ENCODE measurements at regions of chr7 and their contacts with region 1.

Region 1: GRCh38 chr7:41940760-41941343 is 238.0 kb upstream of the INHBA start:
- DNase-seq: peak; percentile 38 to 53
- ATAC-seq: peak; percentile 87 to 89
- H3K4me3 ChIP-seq: no peak overlapping the region
- H3K27ac ChIP-seq: no peak overlapping the region
- H3K4me1 ChIP-seq: peaks cover 0 to 3% of the 10 kb centered on the region in 2 donors
- H3K27me3 ChIP-seq: no peaks in the 10 kb centered on the region
- CTCF ChIP-seq: peak; percentile 74 to 90 (median 83)
- POLR2A ChIP-seq: no peak

Region 2: GRCh38 chr7:41977151-41977651 is 36.3 kb after region 1 on chr7:
- in situ Hi-C with region 1: no loop called
- intact Hi-C with region 1: loop called (anchors 2 kb)
- DNase-seq: peak; percentile 34 to 66
- ATAC-seq: peak; percentile 86 to 89
- H3K4me3 ChIP-seq: no peak overlapping the region
- H3K27ac ChIP-seq: peak overlapping the region; percentile 33 to 65 (median 54)
- H3K4me1 ChIP-seq: peaks cover 30 to 48% of the 10 kb centered on the region in 2 donors
- H3K27me3 ChIP-seq: no peaks in the 10 kb centered on the region
- CTCF ChIP-seq: peak; percentile 65 to 80 (median 68)
- POLR2A ChIP-seq: no peak

Region 3: DNA sequence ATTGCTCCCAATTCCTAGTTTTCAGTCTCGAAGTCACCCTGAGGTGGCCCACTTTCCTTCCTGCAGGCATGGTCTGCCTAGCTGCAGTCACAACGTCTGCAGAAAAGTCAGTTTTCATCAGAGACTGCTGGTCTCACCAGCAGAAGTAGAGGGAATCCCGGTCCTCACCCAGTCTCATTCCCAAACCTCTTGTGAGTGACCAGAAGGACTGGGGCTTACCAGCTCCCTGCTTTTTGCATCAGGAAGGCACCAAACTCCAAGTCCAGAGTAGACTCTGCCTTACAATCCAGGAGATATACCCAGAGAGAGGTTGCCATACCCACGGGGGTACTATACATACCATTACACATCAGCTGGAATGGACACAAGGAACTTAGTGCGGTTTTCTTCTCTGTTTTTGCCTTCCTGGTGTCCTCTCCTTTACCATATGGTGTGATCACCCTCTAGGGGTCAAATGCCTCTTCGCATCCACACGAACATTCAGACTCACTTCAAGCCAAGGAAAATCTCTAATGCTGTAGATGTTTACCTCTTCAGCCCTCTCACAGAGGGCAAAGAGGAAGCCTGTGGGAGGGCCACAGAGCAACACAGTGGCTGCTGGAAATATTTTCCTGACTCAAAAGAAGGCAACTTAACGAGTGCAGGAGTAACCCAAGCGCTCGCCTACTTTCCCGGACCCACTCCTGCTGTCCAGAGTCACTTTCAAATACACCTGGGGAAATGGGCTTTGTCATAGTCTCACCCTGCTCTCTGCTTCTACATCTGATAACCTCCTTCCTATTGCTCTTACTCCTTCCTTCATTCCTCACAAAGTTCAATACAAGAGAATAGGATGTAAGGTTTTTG is 750.2 kb after region 1 on chr7:
- in situ Hi-C with region 1: no loop called
- intact Hi-C with region 1: loop called (anchors 5 kb)
- DNase-seq: no peak
- ATAC-seq: no peak
- H3K4me3 ChIP-seq: no peak overlapping the region
- H3K27ac ChIP-seq: no peak overlapping the region
- H3K4me1 ChIP-seq: peaks cover 0 to 12% of the 10 kb centered on the region in 2 donors
- H3K27me3 ChIP-seq: no peaks in the 10 kb centered on the region
- CTCF ChIP-seq: peak in 1 of 5 experiments; percentile 13
- POLR2A ChIP-seq: no peak

Region 4: DNA sequence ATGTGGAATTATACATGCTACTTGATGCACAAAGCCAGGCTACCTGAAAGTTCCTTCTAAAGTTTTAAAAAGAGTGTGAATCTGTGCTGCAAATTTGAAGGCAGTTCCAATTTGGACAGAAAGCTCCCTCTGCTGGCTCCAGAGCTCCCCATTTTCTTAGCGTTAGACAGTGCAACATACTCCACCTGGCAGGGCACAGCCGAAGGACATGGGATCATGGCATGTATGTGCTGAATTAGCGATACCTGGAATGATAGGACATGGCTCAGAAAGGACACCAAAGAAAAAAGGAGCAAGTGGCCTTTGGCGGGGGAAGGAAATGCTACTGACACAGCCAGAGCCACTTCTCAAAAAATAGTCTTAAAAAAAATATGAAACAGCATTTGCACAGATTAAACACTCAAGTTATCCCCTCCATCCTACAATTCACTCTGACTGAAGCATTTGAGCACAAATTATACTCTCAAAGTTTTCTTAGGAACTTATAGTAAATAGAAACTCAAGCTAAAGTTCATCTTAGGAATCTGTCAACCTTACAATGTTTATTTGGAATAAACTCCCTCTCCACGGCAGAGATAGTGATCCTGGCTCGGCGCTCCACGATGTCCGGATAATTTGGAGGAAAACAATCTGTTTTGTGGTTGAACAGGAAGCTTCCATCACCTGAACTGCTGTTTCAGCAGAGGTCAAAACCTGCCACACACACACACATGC is 891.0 kb after region 1 on chr7:
- in situ Hi-C with region 1: loop called in 3 of 4 experiments (anchors 5 to 10 kb)
- intact Hi-C with region 1: no loop called
- DNase-seq: peak in 1 of 2 donors; percentile 14
- ATAC-seq: no peak
- H3K4me3 ChIP-seq: no peak overlapping the region
- H3K27ac ChIP-seq: no peak overlapping the region
- H3K4me1 ChIP-seq: peaks cover 0 to 5% of the 10 kb centered on the region in 2 donors
- H3K27me3 ChIP-seq: no peaks in the 10 kb centered on the region
- CTCF ChIP-seq: peak in 3 of 5 experiments; percentile 32 to 50 (median 42)
- POLR2A ChIP-seq: no peak

Region 5: GRCh38 chr7:42843205-42843800 is 902.5 kb after region 1 on chr7:
- in situ Hi-C with region 1: loop called in 3 of 4 experiments (anchors 10 kb)
- intact Hi-C with region 1: loop called (anchors 1 kb)
- DNase-seq: peak in 1 of 2 donors; percentile 23
- ATAC-seq: peak; percentile 49 to 68
- H3K4me3 ChIP-seq: peak overlapping the region in 2 of 4 donors; percentile 24 to 34
- H3K27ac ChIP-seq: no peak overlapping the region
- H3K4me1 ChIP-seq: peaks cover 0 to 3% of the 10 kb centered on the region in 2 donors
- H3K27me3 ChIP-seq: no peaks in the 10 kb centered on the region
- CTCF ChIP-seq: peak in 3 of 5 experiments; percentile 38 to 49 (median 44)
- POLR2A ChIP-seq: no peak

Region 6: DNA sequence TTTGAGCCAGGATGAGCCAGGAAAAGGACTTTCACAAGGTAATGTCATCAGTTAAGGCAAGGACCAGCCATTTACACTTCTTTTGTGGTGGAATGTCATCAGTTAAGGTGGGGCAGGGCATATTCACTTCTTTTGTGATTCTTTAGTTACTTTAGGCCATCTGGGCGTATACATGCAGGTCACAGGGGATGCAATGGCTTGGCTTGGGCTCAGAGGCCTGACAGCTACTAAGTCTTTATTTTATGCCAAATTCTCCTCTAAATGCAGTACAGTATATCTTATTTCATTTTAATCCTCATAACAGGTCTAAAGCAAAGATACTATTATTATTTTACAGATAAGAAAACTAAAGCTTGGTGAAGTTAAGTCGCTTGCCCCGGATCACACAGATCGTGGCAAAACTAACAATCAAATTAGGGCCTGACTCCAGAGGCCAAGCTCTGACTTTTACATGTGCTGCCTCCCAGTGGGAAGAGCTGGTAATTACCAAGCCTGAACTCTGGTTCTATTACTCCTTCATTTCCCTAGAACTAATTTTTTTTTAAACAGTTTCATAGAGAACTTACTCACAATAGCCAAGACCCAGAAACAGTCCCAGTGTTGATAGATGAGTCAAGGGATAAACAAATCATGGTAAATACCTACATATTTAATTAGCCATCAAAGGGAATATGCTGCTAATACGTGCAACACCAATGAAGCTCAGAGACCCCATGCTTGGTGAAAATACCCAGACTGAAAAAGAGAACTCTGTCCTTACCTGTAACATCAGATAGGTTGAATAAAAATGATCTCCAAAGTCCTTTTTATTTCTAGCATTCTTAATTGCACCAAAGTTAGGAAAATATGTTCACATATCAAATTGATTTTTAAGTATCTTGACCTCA is 935.6 kb after region 1 on chr7:
- in situ Hi-C with region 1: no loop called
- intact Hi-C with region 1: loop called (anchors 1 kb)
- DNase-seq: no peak
- ATAC-seq: peak in 1 of 2 donors; percentile 60
- H3K4me3 ChIP-seq: no peak overlapping the region
- H3K27ac ChIP-seq: no peak overlapping the region
- H3K4me1 ChIP-seq: no peaks in the 10 kb centered on the region
- H3K27me3 ChIP-seq: no peaks in the 10 kb centered on the region
- CTCF ChIP-seq: peak; percentile 32 to 68 (median 42)
- POLR2A ChIP-seq: no peak

Region 7: DNA sequence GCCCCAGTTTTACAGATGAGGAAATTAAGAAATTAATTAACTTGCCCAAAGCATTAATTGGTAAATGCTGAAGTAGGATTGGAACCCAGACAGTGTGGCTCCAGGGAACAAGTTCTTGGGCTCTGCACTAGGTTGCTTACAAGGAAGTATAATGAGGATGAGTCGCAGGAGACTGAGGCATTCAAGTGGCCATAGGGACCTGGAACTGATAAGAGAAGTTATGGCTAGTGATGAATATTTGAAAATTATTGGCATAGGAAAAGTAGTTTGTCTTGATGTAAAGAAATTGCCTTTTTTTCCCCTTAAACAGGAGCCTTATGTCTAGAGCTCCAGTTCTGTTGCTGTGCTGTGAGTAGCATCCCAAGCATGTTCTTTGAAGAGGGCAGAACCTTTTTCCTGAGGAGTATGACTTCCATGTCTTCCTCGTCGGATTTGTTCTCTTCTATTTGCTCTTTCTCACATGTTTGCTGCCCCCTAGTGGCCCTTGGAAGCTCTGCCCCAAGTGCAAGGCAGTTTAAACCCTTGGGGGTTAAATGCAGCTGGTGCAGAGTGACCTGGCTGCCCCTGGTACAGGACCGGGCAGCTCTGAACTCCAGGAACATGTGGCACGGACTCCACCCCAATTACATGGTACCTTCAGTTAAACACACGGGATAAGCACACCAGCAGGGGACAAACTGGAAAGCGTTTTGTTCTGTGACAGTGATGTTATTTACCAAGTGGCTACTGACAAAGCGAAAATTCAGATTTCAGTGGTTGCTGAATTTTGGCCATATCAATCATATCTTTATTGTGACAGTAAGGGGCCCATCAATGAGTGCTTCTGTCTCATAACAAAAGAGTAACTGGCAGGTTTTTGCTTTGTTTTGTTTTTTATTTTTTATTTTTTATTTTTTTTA is 1320.4 kb after region 1 on chr7:
- in situ Hi-C with region 1: no loop called
- intact Hi-C with region 1: loop called (anchors 5 kb)
- DNase-seq: peak; percentile 13 to 49
- ATAC-seq: peak; percentile 60 to 77
- H3K4me3 ChIP-seq: no peak overlapping the region
- H3K27ac ChIP-seq: no peak overlapping the region
- H3K4me1 ChIP-seq: no peaks in the 10 kb centered on the region
- H3K27me3 ChIP-seq: no peaks in the 10 kb centered on the region
- CTCF ChIP-seq: peak; percentile 60 to 88 (median 69)
- POLR2A ChIP-seq: no peak

Measured in gastrocnemius medialis (tissue), 4 donors.